Activated CD4-positive, alpha-beta memory T cell treated with anti-CD3 and anti-CD28 coated beads for 36 hours (primary cell): ENCODE measurements at regions of chr18 and their contacts with region 1.

Region 1: GRCh38 chr18:57970356-57971080 is 73.5 kb upstream of the NEDD4L start:
- DNase-seq: peak; percentile 12
- H3K4me3 Mint-ChIP-seq: no peak overlapping the region
- H3K27ac Mint-ChIP-seq: no peak overlapping the region
- H3K4me1 Mint-ChIP-seq: no peaks in the 10 kb centered on the region
- H3K27me3 Mint-ChIP-seq: peaks cover 5% of the 10 kb centered on the region

Region 2: GRCh38 chr18:58038063-58038462 is 67.5 kb after region 1 on chr18:
- CTCF ChIA-PET with region 1: no interaction called
- POLR2A ChIA-PET with region 1: no interaction called
- intact Hi-C with region 1: no loop called
- DNase-seq: no peak
- H3K4me3 Mint-ChIP-seq: no peak overlapping the region
- H3K27ac Mint-ChIP-seq: no peak overlapping the region
- H3K4me1 Mint-ChIP-seq: peaks cover 8% of the 10 kb centered on the region
- H3K27me3 Mint-ChIP-seq: peaks cover 12% of the 10 kb centered on the region

Region 3: DNA sequence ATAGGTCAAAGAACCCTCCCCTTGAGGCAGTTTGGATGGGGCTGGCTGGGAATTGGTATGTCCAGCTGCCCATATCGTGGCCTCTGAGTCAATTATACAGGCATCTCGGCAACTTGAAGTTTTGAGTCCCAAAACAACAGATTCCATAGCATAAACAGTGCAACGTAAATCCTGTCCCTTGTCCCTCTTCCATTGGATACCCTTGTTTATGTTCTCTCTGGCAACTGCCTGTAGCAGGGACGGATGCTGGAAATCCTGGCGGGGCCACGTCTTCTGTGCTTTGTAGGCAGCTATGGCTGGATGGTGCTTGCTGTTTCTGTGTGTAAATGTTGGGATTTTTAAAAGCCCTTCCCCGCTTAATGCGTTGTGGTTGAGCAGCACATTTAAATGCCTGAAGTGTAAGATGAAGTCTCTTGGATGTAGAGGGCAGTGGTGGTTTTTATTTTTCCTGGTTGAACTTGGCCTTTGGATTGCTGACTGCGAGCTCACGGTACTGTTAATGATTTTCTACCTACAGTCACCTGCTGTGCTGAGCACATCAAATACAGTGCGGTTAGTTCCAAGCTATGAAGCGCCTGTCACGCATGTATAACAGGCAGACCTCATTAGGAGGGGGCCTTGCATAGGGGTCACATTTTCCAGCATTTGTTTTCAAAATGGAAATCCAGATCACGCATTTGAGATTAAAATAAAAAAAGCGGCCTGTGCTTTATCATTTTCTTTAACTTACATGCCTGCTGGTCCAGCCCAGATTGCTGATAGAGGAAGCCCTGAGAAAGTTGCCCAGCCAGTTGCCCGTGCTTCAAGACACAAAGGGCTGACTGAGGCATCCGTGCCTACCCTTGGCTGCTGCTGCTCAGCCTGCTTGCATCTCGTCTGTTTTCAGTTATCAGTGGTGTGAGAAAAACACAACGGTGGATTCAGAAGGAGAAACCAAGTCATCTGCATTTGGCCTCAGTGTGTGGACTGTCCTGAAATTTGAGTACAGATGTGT is 158.2 kb after region 1 on chr18:
- CTCF ChIA-PET with region 1: no interaction called
- POLR2A ChIA-PET with region 1: no interaction called
- intact Hi-C with region 1: loop called (anchors 10 kb)
- DNase-seq: no peak
- H3K4me3 Mint-ChIP-seq: no peak overlapping the region
- H3K27ac Mint-ChIP-seq: no peak overlapping the region
- H3K4me1 Mint-ChIP-seq: no peaks in the 10 kb centered on the region
- H3K27me3 Mint-ChIP-seq: no peaks in the 10 kb centered on the region